ENCODE measurements at regions of chr1 and their contacts with region 1.

Region 1: DNA sequence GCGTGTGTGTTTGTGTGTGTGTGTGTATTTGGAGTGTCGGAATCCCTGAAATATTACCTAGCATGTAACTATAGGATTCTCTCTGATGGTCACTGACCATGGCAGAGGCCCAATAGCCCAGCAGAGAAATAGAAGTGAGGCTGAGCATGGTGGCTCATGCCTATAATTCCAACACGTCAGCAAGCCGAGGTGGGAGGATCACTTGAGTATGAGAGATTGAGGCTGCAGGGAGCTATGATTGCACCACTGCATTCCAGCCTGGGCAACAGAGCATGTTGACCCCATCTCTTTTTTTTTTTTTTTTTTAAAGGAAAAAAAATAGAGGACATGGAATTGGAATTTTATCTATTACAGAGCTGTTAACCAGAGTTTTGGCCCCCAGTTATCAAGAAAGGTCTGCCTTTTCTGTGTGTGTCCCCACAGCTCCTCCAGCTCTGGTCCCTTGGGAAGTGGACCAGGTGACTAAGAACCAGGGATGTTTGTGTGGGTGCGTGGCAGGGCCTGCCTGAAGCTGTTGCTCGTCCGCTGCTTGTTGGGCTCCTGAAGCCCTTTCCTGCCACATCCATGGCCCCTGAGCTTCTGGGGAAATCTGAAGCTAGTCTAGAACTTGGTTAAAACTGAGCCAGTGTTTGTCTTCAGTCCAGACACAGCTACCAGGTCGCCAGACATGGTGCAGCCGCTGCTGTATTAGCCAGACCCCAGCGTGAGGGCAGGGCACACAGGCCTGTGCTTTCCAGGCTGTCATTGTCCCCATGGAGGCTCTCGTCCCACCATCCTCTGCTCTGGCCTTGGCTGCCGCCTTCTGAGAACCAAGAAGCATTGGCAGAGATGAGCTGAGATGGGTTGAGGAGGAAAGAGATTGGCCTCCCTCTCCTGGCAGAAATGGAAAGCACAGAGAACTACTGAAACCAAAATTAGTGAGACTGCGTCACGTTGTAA is 25.5 kb downstream of the CAPN9 start:
- DNase-seq: peak; percentile 59 to 85 (median 79)
- H3K4me3 ChIP-seq: peak overlapping the region in 53 of 59 donors; percentile 4 to 66 (median 41)
- H3K27ac ChIP-seq: peak overlapping the region in 54 of 59 donors; percentile 1 to 84 (median 63)
- H3K27me3 ChIP-seq: no peaks in the 10 kb centered on the region
- CTCF ChIP-seq: peak; percentile 40 to 94 (median 86)

Region 2: GRCh38 chr1:230359992-230360668 is 412.6 kb before region 1 on chr1:
- intact Hi-C with region 1: loop called in 1 of 2 experiments (anchors 10 kb)
- DNase-seq: no peak
- H3K4me3 ChIP-seq: no peak overlapping the region
- H3K27ac ChIP-seq: peak overlapping the region in 11 of 59 donors; percentile 9 to 46 (median 32)
- H3K27me3 ChIP-seq: no peaks in the 10 kb centered on the region
- CTCF ChIP-seq: no peak

Region 3: GRCh38 chr1:230632273-230632873 is 140.4 kb before region 1 on chr1:
- intact Hi-C with region 1: loop called in 1 of 2 experiments (anchors 2 kb)
- DNase-seq: peak in 3 of 10 donors; percentile 44 to 65 (median 49)
- H3K4me3 ChIP-seq: no peak overlapping the region
- H3K27ac ChIP-seq: no peak overlapping the region
- H3K27me3 ChIP-seq: peaks cover 0 to 6% (median 0%) of the 10 kb centered on the region in 45 donors
- CTCF ChIP-seq: peak in 53 of 56 donors; percentile 13 to 69 (median 52)

Region 4: DNA sequence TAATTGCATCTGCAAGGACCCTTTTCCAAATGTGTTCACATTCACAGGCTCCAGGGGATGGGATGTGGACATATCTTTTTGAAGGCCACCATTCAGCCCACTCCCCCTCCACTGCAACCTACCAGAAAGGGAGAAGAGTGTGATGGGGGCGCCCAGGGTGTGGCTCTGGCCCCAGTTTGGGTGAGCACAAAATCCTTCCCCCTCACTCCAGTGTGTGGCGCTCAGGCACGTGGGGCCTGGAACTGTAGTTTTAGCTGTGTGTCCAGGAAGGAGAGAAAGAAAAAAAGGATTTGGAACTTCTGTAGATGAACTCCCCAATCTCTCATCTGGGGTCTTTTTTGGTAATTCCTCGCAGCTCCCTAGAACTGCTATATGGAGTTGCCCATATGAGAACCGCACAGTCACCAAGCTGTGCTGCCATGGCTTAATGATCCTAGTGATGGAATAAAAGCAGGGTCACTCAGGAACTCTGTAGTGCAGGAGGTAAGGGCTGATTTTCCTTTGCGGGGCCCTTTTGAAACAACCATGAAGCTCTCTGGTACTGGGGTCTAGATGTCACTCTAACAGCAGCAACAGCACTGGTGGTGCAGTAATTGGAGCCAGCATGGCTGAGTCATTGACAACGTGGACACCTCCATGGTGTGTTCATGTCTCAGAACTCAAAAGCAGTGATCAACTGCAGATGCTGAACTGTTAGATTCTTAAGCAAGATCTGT is 75.8 kb before region 1 on chr1:
- intact Hi-C with region 1: loop called in 1 of 2 experiments (anchors 5 kb)
- DNase-seq: no peak
- H3K4me3 ChIP-seq: no peak overlapping the region
- H3K27ac ChIP-seq: peak overlapping the region in 18 of 59 donors; percentile 3 to 72 (median 34)
- H3K27me3 ChIP-seq: no peaks in the 10 kb centered on the region
- CTCF ChIP-seq: no peak

Region 5: DNA sequence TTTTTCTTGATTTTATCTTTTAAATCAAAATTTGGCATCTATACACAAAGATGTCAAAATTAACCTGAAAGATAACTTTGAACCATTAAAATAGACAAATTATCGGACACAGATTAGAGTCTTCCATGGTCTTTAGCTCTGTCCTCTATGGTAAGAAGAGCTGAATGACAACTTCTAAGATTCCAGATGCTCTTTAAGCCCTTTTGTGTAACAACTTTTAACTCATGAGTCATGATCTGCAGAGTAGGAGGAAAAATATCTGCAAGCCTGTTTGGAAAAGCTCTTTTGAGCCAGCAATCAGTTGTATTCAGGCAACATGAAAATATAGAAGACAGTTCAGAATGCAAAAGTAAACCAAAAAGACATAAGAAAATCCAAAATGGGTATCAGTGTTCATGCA is 168.1 kb after region 1 on chr1:
- intact Hi-C with region 1: no loop called
- DNase-seq: no peak
- H3K4me3 ChIP-seq: no peak overlapping the region
- H3K27ac ChIP-seq: peak overlapping the region in 10 of 59 donors; percentile 7 to 58 (median 32)
- H3K27me3 ChIP-seq: no peaks in the 10 kb centered on the region
- CTCF ChIP-seq: no peak